Mucosa of descending colon (tissue), 3 donors: ENCODE measurements at regions of chr12 and their contacts with region 1.

Region 1: DNA sequence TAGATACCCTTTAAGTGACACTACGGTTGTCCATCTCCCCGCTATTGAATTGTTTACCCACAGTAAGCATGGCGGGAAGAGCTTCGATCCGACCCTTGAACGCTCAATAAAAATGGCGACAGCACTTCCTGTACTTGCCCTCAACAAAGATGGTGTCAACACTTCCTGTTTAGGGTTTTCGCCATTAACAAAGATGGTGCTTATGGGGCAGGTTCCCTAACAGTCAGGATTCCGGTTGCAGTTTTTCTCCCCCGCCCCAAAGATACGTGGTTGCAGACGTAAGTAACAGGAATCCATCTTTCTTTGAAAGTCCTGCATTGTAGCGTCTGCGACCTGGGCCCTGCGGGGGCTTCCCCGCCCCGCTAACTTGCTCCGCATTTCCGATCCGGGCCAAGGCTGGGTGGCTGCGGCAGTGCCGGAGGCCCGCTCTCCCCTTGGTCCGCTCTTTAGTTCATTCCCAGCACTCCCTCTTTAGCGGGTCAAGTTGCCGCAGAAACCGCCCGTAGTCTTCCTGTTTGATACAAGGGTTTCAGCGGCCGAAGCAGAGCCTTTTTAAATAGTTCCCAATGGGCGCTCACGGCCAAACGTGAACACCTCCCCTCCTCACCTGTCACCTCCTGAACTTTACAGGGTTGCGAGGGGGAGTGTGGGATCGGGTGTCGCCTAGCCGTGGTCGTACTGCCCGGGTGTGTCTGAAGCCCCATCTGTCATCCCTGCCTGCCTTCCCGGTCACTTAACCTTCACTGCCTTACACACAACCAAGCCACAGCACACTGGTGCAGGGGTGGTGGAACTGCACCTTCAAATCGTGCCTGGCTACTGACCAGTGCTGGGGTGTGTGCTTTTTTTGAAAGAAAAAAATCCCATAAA is at the start of gene CRADD:
- DNase-seq: peak; percentile 80 to 86 (median 83)
- ATAC-seq: peak; percentile 97
- H3K4me3 ChIP-seq: peak within 1 kb of the TSS; percentile 27
- H3K4me1 ChIP-seq: peaks cover 4% of the 10 kb centered on the region
- CTCF ChIP-seq: no peak
- total RNA-seq, gene CRADD: 18.4 to 27.9 (median 22.7) TPM

Region 2: DNA sequence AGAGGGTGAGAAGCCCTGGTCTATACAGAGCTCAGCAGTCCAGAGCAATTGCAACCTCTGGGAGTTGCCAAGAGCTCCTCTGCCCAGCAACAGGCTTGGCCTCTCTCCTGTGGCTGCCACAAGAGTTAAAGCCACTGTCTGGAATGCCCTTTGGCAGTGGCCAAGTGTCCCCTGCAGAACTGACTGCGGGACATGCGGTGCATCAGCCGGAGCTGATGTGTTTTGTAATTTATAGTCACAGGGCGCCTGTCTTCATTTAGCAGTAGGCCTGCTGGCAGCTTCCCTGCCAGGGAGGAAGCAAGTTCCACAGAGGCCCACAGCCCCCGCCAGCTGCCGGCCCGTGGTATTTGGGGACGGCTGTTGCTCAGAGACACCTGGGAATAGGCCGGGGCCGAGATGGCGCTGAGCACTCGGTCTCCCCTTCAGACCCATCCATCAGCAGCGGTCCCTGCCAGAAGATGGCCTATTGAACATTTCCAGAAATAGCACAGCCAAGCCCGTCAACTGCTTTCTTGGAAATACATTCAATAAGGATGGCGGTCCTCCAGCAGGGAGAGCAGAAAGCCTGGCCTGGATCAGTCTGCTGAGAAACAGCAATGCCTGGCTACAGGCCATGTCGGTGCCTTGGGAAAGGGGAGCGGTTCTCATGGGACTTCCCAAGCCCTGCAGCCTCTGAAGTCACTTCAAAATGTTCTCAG is 217.1 kb after region 1 on chr12:
- intact Hi-C with region 1: loop called in 1 of 2 experiments (anchors 10 kb)
- DNase-seq: peak; percentile 51 to 65 (median 59)
- ATAC-seq: peak; percentile 15
- H3K4me3 ChIP-seq: no peak overlapping the region
- H3K4me1 ChIP-seq: peaks cover 10% of the 10 kb centered on the region
- CTCF ChIP-seq: no peak